ENCODE measurements at regions of chr22 and their contacts with region 1.

Region 1: DNA sequence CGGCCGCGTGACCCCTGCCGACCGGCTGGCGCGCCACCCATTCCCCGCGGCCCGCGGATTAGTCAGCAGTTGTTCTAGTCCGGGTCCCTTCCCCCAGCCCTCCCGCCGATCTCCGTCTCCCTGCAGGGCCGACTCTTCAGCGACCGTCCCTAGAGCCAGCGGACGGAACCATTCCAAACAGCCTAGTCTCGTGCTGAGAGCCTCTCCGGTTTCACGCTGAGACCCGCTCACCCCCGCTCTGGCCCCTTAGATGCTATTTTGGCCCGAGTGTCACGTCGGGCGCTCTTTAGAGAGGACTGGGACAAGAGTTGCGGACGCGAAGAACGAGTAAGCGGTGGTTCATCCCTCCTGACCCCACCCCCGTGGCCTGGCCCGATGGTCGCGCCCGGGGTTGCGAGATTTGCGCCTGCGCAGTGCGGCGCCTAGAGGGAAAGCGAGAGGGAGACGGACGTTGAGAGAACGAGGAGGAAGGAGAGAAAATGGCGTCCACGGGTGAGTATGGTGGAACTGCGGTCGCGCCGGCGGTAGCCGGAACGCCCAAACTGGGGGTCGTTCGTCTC is at the starts of genes EWSR1 and RHBDD3:
- DNase-seq: peak; percentile 92 to 98 (median 96)
- ATAC-seq: peak; percentile 84
- H3K4me3 ChIP-seq: peak within 1 kb of the TSS; percentile 98
- H3K4me3 Mint-ChIP-seq: peak within 1 kb of the TSS; percentile 95
- H3K27ac ChIP-seq: peak within 1 kb of the TSS; percentile 96 to 97
- H3K27ac Mint-ChIP-seq: peak within 1 kb of the TSS; percentile 98
- H3K4me1 ChIP-seq: peaks cover 50% of the 10 kb centered on the region
- H3K4me1 Mint-ChIP-seq: peaks cover 64% of the 10 kb centered on the region
- H3K27me3 ChIP-seq: no peaks in the 10 kb centered on the region
- H3K27me3 Mint-ChIP-seq: no peaks in the 10 kb centered on the region
- CTCF ChIP-seq: no peak
- total RNA-seq, gene EWSR1: 292 to 309 TPM
- total RNA-seq, gene RHBDD3: 9.0 to 11.7 TPM

Region 2: DNA sequence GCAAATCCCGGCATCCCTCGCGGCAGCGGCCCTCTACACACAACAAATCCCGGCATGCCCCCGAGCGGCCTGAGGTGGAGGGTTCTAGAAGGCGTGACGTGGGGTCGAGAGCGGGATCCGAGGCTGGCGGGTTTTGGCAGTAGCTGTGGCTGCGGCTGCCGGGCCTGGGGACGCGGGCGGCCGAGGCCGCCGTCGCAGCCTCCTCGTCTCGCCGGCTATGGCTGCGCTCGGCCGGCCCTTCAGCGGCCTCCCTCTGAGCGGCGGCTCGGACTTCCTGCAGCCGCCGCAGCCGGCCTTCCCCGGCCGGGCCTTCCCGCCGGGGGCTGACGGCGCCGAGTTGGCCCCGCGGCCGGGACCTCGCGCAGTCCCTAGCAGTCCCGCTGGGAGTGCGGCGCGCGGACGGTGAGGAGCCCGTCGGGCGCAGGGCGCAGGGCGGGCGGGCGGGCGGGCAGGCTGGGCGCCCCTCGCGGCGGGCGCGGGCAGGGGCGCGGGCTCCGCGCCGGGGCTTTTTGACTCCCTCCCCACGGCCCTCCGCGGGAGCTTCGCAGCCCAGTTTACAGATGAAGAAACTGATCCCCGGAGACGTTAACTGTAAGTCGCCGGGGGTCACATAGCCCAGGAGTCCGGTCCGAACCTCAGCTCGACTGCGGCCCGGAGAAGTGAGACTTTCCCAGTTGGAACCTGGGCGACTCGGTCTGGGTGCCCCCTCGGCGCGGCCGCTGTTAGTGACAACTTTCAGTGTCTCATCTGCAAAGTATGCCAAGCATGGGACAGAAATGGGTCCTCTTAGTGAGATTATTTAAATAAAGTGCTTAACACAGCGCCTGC is 495.1 kb before region 1 on chr22 and contains the start of gene CCDC117:
- CTCF ChIA-PET with region 1: no interaction called
- POLR2A ChIA-PET with region 1: no interaction called
- intact Hi-C with region 1: loop called in 1 of 2 experiments (anchors 2 kb)
- DNase-seq: peak; percentile 85 to 97 (median 91)
- ATAC-seq: peak; percentile 97
- H3K4me3 ChIP-seq: peak within 1 kb of the TSS; percentile 83
- H3K4me3 Mint-ChIP-seq: peak within 1 kb of the TSS; percentile 95
- H3K27ac ChIP-seq: peak within 1 kb of the TSS; percentile 61 to 73
- H3K27ac Mint-ChIP-seq: peak within 1 kb of the TSS; percentile 88
- H3K4me1 ChIP-seq: peaks cover 34% of the 10 kb centered on the region
- H3K4me1 Mint-ChIP-seq: peaks cover 27% of the 10 kb centered on the region
- H3K27me3 ChIP-seq: no peaks in the 10 kb centered on the region
- H3K27me3 Mint-ChIP-seq: no peaks in the 10 kb centered on the region
- CTCF ChIP-seq: no peak
- total RNA-seq, gene CCDC117: 14.2 to 16.1 TPM

Region 3: DNA sequence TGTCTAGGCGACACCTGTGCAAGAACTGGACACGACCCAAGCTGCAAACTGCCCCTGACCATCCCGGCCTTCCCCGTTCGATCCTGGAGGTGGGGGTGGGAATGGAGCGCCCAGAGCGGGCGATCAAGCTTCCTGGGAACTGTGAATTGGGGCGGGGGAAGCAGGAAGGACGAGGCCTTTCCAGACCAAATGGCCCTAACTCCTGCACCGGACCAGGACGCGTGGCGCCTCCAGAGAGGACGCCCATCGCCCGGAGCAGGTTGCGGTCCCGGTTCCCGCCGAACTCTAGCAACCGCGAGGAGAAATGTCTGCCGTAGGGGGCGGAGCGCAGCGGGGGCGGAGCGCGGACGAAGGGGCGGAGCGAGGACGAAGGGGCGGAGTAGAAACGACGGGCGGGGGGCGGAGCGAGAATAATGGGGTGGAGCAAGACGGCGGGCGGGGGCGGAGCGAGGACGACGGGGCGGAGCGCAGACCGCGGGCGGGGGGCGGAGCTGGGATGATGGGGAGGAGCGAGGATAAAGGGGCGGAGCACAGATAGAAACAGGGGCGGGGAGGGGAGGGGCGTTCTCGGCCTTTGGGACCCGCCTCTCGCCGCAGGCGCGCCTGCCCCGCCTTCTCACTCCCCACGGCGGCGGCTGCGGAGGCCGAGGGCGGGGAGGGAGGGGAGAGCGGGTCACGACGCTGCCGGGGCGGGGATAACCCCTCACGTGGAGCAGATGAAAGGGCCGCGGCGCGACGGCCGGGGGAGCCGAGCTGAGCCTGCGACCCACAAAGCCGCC is 384.9 kb before region 1 on chr22 and contains the start of gene ZNRF3:
- CTCF ChIA-PET with region 1: no interaction called
- POLR2A ChIA-PET with region 1: no interaction called
- intact Hi-C with region 1: loop called in 1 of 2 experiments (anchors 5 kb)
- DNase-seq: peak; percentile 86 to 96 (median 92)
- ATAC-seq: peak; percentile 87
- H3K4me3 ChIP-seq: peak within 1 kb of the TSS; percentile 82
- H3K4me3 Mint-ChIP-seq: peak within 1 kb of the TSS; percentile 94
- H3K27ac ChIP-seq: no peak within 1 kb of the TSS
- H3K27ac Mint-ChIP-seq: peak within 1 kb of the TSS; percentile 74
- H3K4me1 ChIP-seq: peaks cover 16% of the 10 kb centered on the region
- H3K4me1 Mint-ChIP-seq: peaks cover 23% of the 10 kb centered on the region
- H3K27me3 ChIP-seq: peaks cover 4 to 7% of the 10 kb centered on the region in 2 experiments
- H3K27me3 Mint-ChIP-seq: peaks cover 23% of the 10 kb centered on the region
- CTCF ChIP-seq: no peak
- total RNA-seq, gene ZNRF3: 0.38 to 0.61 TPM

Region 4: GRCh38 chr22:29387921-29388758 is 120.2 kb after region 1 on chr22 and contains the start of gene AP1B1:
- CTCF ChIA-PET with region 1: no interaction called
- POLR2A ChIA-PET with region 1: no interaction called
- intact Hi-C with region 1: loop called in 1 of 2 experiments (anchors 5 kb)
- DNase-seq: peak; percentile 79 to 96 (median 92)
- ATAC-seq: peak; percentile 91
- H3K4me3 ChIP-seq: peak within 1 kb of the TSS; percentile 91
- H3K4me3 Mint-ChIP-seq: peak within 1 kb of the TSS; percentile 96
- H3K27ac ChIP-seq: peak within 1 kb of the TSS; percentile 58 to 80
- H3K27ac Mint-ChIP-seq: peak within 1 kb of the TSS; percentile 85
- H3K4me1 ChIP-seq: peaks cover 48% of the 10 kb centered on the region
- H3K4me1 Mint-ChIP-seq: peaks cover 52% of the 10 kb centered on the region
- H3K27me3 ChIP-seq: no peaks in the 10 kb centered on the region
- H3K27me3 Mint-ChIP-seq: no peaks in the 10 kb centered on the region
- CTCF ChIP-seq: no peak
- total RNA-seq, gene AP1B1: 25.6 to 26.4 TPM

Region 5: DNA sequence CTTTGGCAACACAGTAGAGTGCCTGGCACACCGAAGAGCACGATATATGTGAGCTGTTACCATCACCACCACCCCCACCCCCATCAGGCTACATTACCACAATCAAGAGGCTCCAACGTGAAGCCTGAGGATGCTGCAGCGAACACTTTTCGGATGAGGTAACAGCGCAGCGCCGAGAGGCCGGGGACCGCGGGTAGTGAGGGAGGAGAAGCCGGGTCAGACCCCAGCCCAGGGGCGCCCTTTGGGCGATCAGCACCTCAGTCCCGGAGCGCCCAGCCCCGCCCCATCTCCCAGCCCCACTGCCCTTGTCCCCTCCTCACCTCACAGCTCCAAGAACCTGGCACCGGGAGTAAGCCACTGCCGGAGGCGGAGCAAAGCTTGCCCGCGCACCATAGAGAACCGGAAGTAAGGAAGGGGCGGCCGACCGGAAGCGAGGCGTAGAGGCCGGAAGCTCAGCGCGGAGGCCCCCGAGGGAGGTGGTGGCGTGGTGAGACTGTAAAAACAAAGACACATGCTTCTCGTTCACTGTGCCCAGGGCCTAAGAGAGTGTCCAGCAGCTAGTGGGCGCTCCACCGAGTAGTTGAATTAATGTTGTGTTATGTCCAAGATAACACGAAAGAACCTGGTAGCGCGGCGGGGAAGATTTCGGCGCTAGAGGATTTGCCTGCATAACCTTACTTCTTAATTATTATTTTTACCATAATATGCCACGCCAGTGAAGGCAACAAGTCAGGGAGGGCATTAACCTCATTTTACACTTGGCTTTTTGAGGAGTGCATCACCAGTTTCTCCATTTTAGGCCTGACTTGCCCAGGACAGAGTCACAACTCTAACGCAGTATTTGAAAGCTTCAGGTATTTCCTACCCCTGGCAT is 285.6 kb after region 1 on chr22 and contains the start of gene THOC5:
- CTCF ChIA-PET with region 1: no interaction called
- POLR2A ChIA-PET with region 1: interaction called, 4 read pairs
- intact Hi-C with region 1: loop called in 1 of 2 experiments (anchors 10 kb)
- DNase-seq: peak; percentile 80 to 93 (median 86)
- ATAC-seq: peak; percentile 93
- H3K4me3 ChIP-seq: peak within 1 kb of the TSS; percentile 83
- H3K4me3 Mint-ChIP-seq: peak within 1 kb of the TSS; percentile 95
- H3K27ac ChIP-seq: peak within 1 kb of the TSS; percentile 54 to 84
- H3K27ac Mint-ChIP-seq: peak within 1 kb of the TSS; percentile 94
- H3K4me1 ChIP-seq: peaks cover 22% of the 10 kb centered on the region
- H3K4me1 Mint-ChIP-seq: peaks cover 15% of the 10 kb centered on the region
- H3K27me3 ChIP-seq: no peaks in the 10 kb centered on the region
- H3K27me3 Mint-ChIP-seq: no peaks in the 10 kb centered on the region
- CTCF ChIP-seq: no peak
- total RNA-seq, gene THOC5: 27.1 to 32.9 TPM

Region 6: GRCh38 chr22:29883045-29883774 is 615.3 kb after region 1 on chr22 and contains the start of gene MTMR3:
- CTCF ChIA-PET with region 1: no interaction called
- POLR2A ChIA-PET with region 1: no interaction called
- intact Hi-C with region 1: loop called in 1 of 2 experiments (anchors 10 kb)
- DNase-seq: peak; percentile 69 to 96 (median 91)
- ATAC-seq: peak; percentile 75
- H3K4me3 ChIP-seq: peak within 1 kb of the TSS; percentile 96
- H3K4me3 Mint-ChIP-seq: peak within 1 kb of the TSS; percentile 96
- H3K27ac ChIP-seq: peak within 1 kb of the TSS; percentile 15 to 75
- H3K27ac Mint-ChIP-seq: peak within 1 kb of the TSS; percentile 87
- H3K4me1 ChIP-seq: peaks cover 22% of the 10 kb centered on the region
- H3K4me1 Mint-ChIP-seq: peaks cover 2% of the 10 kb centered on the region
- H3K27me3 ChIP-seq: no peaks in the 10 kb centered on the region
- H3K27me3 Mint-ChIP-seq: no peaks in the 10 kb centered on the region
- CTCF ChIP-seq: peak; percentile 51
- total RNA-seq, gene MTMR3: 57.8 to 60.6 TPM

Measured in CD4-positive, alpha-beta T cell (primary cell).